Dorsolateral prefrontal cortex (tissue), 120 donors: ENCODE measurements at regions of chr19 and their contacts with region 1.

Region 1: GRCh38 chr19:36489118-36489919 is at the start of gene ZNF566:
- DNase-seq: peak; percentile 78 to 95 (median 93)
- H3K4me3 ChIP-seq: peak within 1 kb of the TSS; percentile 65 to 99 (median 90)
- H3K27ac ChIP-seq: peak within 1 kb of the TSS; percentile 86 to 100 (median 97)
- H3K27me3 ChIP-seq: no peaks in the 10 kb centered on the region
- CTCF ChIP-seq: peak in 29 of 56 donors; percentile 7 to 53 (median 24)
- total RNA-seq, gene ZNF566: 14.7 to 34.4 (median 22.9) TPM

Region 2: GRCh38 chr19:36139473-36140303 is 349.6 kb before region 1 on chr19 and contains the start of gene CAPNS1:
- intact Hi-C with region 1: loop called (anchors 5 to 10 kb)
- DNase-seq: peak; percentile 94 to 99 (median 97)
- H3K4me3 ChIP-seq: peak within 1 kb of the TSS; percentile 69 to 98 (median 92)
- H3K27ac ChIP-seq: peak within 1 kb of the TSS; percentile 84 to 99 (median 95)
- H3K27me3 ChIP-seq: no peaks in the 10 kb centered on the region
- CTCF ChIP-seq: peak in 32 of 56 donors; percentile 5 to 50 (median 25)
- total RNA-seq, gene CAPNS1: 254 to 668 (median 504) TPM

Region 3: DNA sequence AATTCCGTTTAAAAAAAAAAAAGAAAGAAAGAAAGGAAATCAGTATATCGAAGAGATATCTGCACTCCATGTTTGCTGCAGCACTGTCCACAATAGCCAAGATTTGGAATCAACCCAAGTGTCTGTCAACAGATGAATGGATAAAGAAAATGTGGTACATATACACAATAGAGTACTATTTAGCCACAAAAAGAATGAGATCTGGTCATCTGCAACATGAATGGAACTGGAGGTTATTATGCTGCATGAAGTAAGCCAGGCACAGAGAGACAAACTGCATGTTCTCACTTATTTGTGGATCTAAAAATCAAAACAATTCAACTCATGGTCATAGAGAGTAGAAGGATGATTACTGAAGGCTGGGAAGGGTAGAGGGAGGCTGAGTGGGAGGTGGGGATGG is 291.2 kb before region 1 on chr19:
- intact Hi-C with region 1: loop called in 1 of 2 experiments (anchors 5 kb)
- DNase-seq: peak in 2 of 10 donors; percentile 13 to 35
- H3K4me3 ChIP-seq: peak overlapping the region in 18 of 59 donors; percentile 0 to 36 (median 15)
- H3K27ac ChIP-seq: peak overlapping the region in 58 of 59 donors; percentile 66 to 99 (median 92)
- H3K27me3 ChIP-seq: no peaks in the 10 kb centered on the region
- CTCF ChIP-seq: no peak

Region 4: DNA sequence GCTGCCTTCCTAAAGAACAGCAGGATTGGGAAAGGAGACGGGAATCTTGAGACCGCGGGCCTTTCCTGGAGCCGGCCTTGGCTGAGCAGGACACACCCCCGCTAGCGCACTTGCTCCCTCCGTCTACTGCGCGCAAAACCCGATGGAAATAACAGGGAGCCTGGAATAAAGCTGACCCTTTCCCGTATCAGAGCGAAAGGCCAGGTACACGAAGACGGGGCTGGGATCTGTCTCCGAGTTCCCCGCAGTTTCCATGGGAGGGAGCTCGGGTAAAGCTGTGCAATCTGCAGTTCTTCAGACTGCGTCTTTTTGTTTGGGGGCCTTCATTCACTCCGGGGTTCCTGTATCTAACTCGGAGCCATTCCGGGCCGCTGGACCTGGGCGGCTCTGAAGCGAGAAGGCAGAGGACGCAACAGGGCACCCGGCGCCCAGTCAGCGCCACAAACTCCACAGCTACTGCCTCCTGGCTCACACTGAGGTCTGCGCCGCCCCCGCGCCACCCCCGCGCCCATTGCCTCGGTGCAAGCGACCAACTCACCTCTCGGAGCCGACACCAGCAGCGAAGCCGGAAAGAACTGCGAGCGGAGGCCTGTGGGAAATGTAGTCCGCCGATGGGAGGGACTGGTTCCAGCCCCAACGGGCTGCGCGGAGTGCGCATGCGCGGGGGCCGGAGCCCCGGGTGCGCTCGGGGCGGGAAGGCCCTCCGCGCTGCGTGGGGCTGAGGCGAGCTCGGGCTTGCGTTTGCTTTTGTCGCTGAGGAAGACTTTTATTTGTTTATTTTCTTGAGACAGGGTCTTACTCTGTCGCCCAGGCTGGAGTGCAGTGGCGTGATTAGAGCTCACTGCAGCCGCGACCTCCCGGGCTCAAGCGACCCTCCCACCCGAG is 110.5 kb before region 1 on chr19 and contains the start of gene ZFP14:
- intact Hi-C with region 1: loop called in 1 of 2 experiments (anchors 2 kb)
- DNase-seq: peak; percentile 91 to 97 (median 95)
- H3K4me3 ChIP-seq: peak within 1 kb of the TSS; percentile 66 to 96 (median 86)
- H3K27ac ChIP-seq: peak within 1 kb of the TSS; percentile 49 to 97 (median 88)
- H3K27me3 ChIP-seq: no peaks in the 10 kb centered on the region
- CTCF ChIP-seq: peak in 35 of 56 donors; percentile 7 to 63 (median 33)
- total RNA-seq, gene ZFP14: 12.3 to 23.4 (median 16.5) TPM

Region 5: GRCh38 chr19:36418287-36419001 is 70.9 kb before region 1 on chr19 and contains the start of gene ZFP82:
- intact Hi-C with region 1: loop called (anchors 2 to 5 kb)
- DNase-seq: peak; percentile 63 to 90 (median 76)
- H3K4me3 ChIP-seq: peak within 1 kb of the TSS; percentile 65 to 98 (median 85)
- H3K27ac ChIP-seq: peak within 1 kb of the TSS; percentile 57 to 97 (median 89)
- H3K27me3 ChIP-seq: no peaks in the 10 kb centered on the region
- CTCF ChIP-seq: peak in 33 of 56 donors; percentile 5 to 57 (median 23)
- total RNA-seq, gene ZFP82: 7.3 to 21.1 (median 13.8) TPM